Right cardiac atrium (tissue), 5 donors: ENCODE measurements at regions of chr7 and their contacts with region 1.

Region 1: DNA sequence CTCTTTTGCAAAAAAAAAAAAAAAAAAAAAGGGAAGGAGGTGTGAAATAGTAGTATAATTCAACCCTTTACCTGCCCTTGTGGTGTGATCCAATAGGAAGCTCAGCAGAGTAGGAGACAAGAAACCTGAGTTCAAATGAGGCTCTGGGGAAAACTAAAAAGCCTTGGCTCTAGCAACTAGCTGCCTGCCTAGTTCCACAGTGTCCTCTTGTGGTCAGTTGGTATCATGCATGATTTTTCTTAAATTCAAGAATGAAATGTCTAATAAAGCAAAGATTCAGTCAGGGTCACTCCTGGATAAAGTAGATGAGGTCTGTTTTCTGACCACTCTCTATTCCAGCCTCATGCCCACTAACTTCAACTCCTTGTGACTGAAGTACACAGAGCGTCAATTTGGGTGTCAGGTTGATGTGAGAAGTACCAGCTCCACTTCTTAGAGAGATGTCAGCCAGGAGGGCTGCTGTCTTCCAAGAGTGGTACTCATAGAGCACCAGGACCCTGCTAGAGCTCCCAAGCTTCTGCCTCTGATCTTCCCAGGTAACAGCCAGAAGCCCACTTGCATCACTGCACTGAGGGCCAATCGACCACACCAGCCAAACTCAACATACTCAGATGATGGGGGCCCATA is 10.5 kb downstream of the LSM5 start:
- DNase-seq: no peak
- ATAC-seq: peak; percentile 22 to 45
- H3K4me3 ChIP-seq: no peak overlapping the region
- H3K27ac ChIP-seq: no peak overlapping the region
- H3K4me1 ChIP-seq: no peaks in the 10 kb centered on the region
- H3K27me3 ChIP-seq: no peaks in the 10 kb centered on the region

Region 2: DNA sequence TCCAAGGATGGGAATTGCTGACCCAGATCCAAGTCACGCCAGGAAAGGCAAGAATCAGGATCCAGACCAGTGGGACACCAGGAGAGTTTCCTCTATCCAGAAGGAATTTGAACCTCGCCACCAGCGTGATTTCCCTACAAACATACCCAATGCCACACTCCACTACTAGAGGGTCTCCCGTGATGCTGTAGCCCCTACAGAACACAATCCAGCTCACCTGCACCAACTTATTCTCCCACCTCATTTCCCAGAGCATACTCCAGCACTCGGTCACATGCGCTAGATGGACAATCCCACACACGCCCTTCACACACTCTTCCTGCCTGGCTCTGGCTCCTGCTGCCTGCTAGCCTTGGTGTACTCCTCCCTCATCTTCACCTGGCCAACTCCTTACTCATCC is 267.4 kb before region 1 on chr7:
- intact Hi-C with region 1: loop called in 3 of 4 experiments (anchors 5 to 10 kb)
- DNase-seq: no peak
- ATAC-seq: no peak
- H3K4me3 ChIP-seq: no peak overlapping the region
- H3K27ac ChIP-seq: no peak overlapping the region
- H3K4me1 ChIP-seq: peaks cover 1% of the 10 kb centered on the region
- H3K27me3 ChIP-seq: no peaks in the 10 kb centered on the region

Region 3: DNA sequence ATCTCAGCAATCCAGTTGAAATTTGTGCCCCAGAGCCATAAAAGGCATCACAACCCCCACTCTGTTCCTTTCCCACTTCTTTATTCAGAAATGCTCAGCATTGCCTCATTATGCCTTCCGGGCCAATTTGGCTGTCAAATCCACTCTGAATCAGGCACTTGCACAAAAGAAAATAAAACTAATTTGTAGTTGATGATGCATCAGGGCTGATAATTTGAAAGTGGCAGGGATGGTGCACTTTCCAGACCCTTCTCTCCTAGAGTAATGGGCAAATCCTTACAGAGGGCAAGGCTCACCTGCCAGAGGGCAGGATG is 261.6 kb before region 1 on chr7:
- intact Hi-C with region 1: loop called in 2 of 4 experiments (anchors 5 to 10 kb)
- DNase-seq: peak in 2 of 3 donors; percentile 26 to 63
- ATAC-seq: peak; percentile 73 to 85
- H3K4me3 ChIP-seq: no peak overlapping the region
- H3K27ac ChIP-seq: no peak overlapping the region
- H3K4me1 ChIP-seq: peaks cover 3% of the 10 kb centered on the region
- H3K27me3 ChIP-seq: no peaks in the 10 kb centered on the region

Region 4: DNA sequence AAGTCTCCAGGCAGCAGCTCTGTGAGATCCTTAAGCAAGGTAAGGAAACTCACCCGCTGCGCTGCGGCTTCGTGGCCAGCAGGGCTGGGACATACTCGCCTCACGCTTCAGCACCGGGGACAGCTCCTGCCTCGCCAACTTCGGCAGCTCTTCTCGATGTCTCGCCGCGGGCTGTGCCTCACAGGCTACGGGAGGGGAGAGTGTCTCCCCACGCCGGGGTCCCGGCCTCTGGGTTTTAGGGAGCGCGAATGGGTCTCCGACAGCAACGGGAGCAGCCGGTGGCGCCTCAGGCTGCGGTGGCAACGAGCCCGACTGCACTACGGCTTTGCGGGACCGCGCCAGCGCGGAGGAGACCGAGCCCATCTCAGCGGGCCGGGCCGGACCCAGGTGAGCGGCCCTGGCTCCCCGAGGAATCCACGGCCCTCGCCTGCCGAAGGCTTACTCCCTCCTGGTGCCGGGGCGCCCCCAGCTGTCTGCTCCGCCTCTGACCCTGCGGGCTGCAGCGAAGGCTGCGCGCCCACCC is 51.9 kb before region 1 on chr7:
- intact Hi-C with region 1: no loop called
- DNase-seq: peak; percentile 85 to 93 (median 92)
- ATAC-seq: peak; percentile 83 to 90
- H3K4me3 ChIP-seq: no peak overlapping the region
- H3K27ac ChIP-seq: no peak overlapping the region
- H3K4me1 ChIP-seq: no peaks in the 10 kb centered on the region
- H3K27me3 ChIP-seq: no peaks in the 10 kb centered on the region

Region 5: DNA sequence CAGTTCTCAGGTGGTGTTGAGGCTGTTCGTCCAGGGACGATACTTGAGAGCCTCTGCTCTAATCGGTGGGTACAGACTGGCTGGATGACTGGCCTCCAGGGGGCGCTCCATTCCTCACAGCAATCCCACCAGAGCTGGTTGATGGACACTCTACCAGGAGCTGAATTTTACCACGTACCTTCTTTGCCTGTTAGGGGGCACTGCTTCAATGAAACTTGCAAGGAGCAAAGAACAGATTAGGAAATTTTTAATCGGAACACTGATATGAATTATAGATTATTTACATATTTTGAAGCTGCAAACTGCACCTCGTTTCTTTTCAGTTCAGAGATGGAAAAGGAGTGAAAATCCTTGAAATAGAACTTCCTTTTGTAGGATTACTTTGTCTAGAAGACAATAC is 367.0 kb after region 1 on chr7:
- intact Hi-C with region 1: no loop called
- DNase-seq: peak; percentile 87 to 96 (median 93)
- ATAC-seq: peak; percentile 97 to 99
- H3K4me3 ChIP-seq: no peak overlapping the region
- H3K27ac ChIP-seq: no peak overlapping the region
- H3K4me1 ChIP-seq: no peaks in the 10 kb centered on the region
- H3K27me3 ChIP-seq: no peaks in the 10 kb centered on the region